Gastrocnemius medialis (tissue), 4 donors: ENCODE measurements at regions of chr18 and their contacts with region 1.

Region 1: GRCh38 chr18:77749089-77749488 is 499.4 kb downstream of the GALR1 start:
- DNase-seq: no peak
- ATAC-seq: no peak
- H3K4me3 ChIP-seq: no peak overlapping the region
- H3K27ac ChIP-seq: no peak overlapping the region
- H3K4me1 ChIP-seq: no peaks in the 10 kb centered on the region
- H3K27me3 ChIP-seq: no peaks in the 10 kb centered on the region
- CTCF ChIP-seq: no peak
- POLR2A ChIP-seq: no peak

Region 2: DNA sequence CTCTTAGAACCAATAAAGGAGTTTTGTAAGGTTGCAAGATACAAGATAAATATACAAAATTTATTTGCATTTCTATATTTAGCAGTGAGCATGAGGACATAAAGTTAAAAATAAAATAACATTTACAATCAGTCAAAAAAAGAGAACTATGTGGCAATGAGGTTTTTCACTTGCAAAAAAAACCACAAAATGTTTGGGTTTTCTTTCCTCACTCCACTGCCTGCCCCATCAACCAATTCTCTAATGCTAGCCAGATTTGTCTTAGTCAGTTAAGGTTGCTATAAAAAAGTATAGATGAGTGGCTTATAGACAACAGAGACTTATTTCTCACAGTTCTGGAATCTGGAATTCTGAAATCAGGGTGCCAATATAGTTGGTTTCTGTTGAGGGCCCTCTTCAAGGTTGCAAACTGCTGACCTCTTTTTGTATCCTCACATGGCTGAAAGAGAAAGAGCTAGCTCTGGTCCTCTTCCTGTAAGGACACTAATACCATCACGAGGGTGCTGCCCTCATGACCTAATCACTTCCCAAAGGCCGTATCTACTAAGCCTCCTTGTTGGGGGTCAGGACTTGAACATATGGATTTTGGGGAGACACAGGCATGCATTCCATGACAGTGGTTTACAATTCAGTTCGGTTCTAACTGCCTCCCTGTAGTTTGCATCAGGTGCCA is 66.7 kb after region 1 on chr18:
- in situ Hi-C with region 1: no loop called
- intact Hi-C with region 1: no loop called
- DNase-seq: no peak
- ATAC-seq: no peak
- H3K4me3 ChIP-seq: no peak overlapping the region
- H3K27ac ChIP-seq: no peak overlapping the region
- H3K4me1 ChIP-seq: no peaks in the 10 kb centered on the region
- H3K27me3 ChIP-seq: no peaks in the 10 kb centered on the region
- CTCF ChIP-seq: no peak
- POLR2A ChIP-seq: no peak

Region 3: DNA sequence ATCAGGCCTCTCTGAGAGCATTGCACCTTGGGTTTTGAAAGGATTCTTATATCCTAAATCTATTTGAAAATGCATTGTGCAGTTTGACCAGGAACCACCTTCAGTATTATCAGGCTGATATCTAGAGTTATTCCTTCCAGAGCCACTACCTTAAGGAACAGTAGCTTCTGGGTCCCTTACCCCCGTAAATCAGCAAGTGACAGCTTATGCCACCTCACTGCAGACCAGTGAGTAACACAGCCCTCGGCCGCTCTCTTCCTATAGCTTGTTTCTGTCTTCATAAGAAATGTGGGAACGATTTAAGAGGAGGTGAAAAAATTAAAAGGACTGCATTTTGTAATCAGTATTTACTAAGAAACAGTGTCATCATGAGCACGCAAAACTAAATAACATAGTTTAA is 84.7 kb after region 1 on chr18:
- in situ Hi-C with region 1: loop called in 1 of 4 experiments (anchors 25 kb)
- intact Hi-C with region 1: no loop called
- DNase-seq: no peak
- ATAC-seq: no peak
- H3K4me3 ChIP-seq: no peak overlapping the region
- H3K27ac ChIP-seq: no peak overlapping the region
- H3K4me1 ChIP-seq: no peaks in the 10 kb centered on the region
- H3K27me3 ChIP-seq: no peaks in the 10 kb centered on the region
- CTCF ChIP-seq: no peak
- POLR2A ChIP-seq: no peak